CD4-positive, alpha-beta memory T cell (primary cell): ENCODE measurements at regions of chr13 and their contacts with region 1.

Region 1: DNA sequence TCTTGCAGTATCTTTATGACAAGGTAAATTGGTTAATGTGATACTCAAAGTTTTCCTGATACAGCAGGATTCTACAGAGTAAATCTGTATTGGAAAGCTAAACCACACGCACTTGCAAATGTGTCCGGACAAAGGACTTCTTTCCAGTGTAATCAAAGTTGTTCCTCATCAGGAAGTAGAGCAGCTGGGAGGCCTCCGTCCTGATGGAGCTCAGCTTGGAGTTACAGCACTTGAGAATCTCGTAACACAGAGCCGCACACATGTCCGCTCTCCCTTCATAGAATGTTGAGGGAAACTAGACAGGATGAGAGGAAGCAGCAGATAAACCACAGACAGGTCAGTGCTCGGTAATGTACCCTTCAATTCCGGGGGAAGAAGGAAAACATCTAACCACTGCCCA is 78.8 kb upstream of the SLC15A1 start:
- DNase-seq: no peak
- H3K4me3 ChIP-seq: no peak overlapping the region
- H3K4me3 Mint-ChIP-seq: no peak overlapping the region
- H3K27ac ChIP-seq: no peak overlapping the region
- H3K27ac Mint-ChIP-seq: no peak overlapping the region
- H3K4me1 ChIP-seq: no peaks in the 10 kb centered on the region
- H3K4me1 Mint-ChIP-seq: peaks cover 0 to 3% (median 0%) of the 10 kb centered on the region in 4 donors
- H3K27me3 ChIP-seq: no peaks in the 10 kb centered on the region
- H3K27me3 Mint-ChIP-seq: no peaks in the 10 kb centered on the region

Region 2: GRCh38 chr13:98598043-98598442 is 233.2 kb before region 1 on chr13:
- CTCF ChIA-PET with region 1: no interaction called
- POLR2A ChIA-PET with region 1: no interaction called
- intact Hi-C with region 1: no loop called
- DNase-seq: no peak
- H3K4me3 ChIP-seq: no peak overlapping the region
- H3K4me3 Mint-ChIP-seq: no peak overlapping the region
- H3K27ac ChIP-seq: no peak overlapping the region
- H3K27ac Mint-ChIP-seq: peak overlapping the region in 1 of 7 donors; percentile 18
- H3K4me1 ChIP-seq: no peaks in the 10 kb centered on the region
- H3K4me1 Mint-ChIP-seq: no peaks in the 10 kb centered on the region
- H3K27me3 ChIP-seq: no peaks in the 10 kb centered on the region
- H3K27me3 Mint-ChIP-seq: no peaks in the 10 kb centered on the region

Region 3: DNA sequence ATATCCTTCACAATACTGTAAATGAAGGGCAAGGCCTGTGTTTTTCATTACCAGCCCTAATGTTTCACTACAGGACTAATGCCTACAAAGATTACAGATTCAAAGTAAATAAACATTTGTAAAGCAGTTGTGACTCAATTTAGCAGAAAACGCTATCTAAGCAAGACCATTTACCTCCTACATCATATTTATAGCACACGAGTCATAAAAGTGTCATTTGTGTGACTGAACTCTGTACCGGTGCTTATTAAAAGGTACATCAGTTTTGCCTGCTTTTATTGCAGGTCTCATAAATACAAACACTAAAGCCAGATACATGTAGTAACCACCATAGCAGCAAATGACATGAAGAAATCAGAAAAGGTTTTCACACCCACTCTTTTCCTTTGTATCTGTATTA is 17.2 kb before region 1 on chr13:
- CTCF ChIA-PET with region 1: no interaction called
- POLR2A ChIA-PET with region 1: no interaction called
- intact Hi-C with region 1: no loop called
- DNase-seq: no peak
- H3K4me3 ChIP-seq: no peak overlapping the region
- H3K4me3 Mint-ChIP-seq: no peak overlapping the region
- H3K27ac ChIP-seq: no peak overlapping the region
- H3K27ac Mint-ChIP-seq: peak overlapping the region in 1 of 7 donors; percentile 12
- H3K4me1 ChIP-seq: no peaks in the 10 kb centered on the region
- H3K4me1 Mint-ChIP-seq: peaks cover 0 to 1% (median 0%) of the 10 kb centered on the region in 4 donors
- H3K27me3 ChIP-seq: no peaks in the 10 kb centered on the region
- H3K27me3 Mint-ChIP-seq: no peaks in the 10 kb centered on the region

Region 4: DNA sequence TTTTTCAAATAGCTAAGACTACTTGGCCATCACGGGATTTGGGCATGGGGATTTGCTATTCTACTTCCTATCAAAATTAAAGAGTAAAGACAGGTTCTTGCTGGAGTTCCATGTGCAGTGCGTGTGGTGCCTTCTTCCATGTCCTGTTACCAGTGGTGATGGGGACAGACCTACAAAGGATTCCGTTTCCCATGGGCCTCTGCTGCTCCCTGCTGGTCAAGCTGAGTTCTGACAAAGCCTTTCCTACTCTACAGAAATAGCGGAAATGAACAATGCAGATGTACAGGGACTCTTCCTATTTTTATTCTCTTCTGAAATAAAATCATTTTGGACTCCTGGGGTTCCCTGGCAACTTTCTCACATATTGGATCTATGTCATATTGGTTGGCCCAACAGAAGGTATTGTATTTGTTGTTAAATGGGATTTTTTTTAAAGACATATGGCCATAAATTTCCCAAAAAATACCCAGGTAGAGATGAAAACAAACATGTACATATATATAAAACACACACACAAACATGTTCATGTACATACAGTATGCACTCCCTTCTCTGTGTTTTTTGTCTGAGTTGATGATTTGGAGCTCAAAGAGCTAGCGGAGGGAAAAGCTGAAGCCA is 11.7 kb after region 1 on chr13:
- CTCF ChIA-PET with region 1: interaction called, 13 read pairs
- POLR2A ChIA-PET with region 1: no interaction called
- intact Hi-C with region 1: no loop called
- DNase-seq: peak; percentile 33 to 47 (median 35)
- H3K4me3 ChIP-seq: no peak overlapping the region
- H3K4me3 Mint-ChIP-seq: no peak overlapping the region
- H3K27ac ChIP-seq: no peak overlapping the region
- H3K27ac Mint-ChIP-seq: peak overlapping the region in 2 of 7 donors; percentile 17 to 36
- H3K4me1 ChIP-seq: no peaks in the 10 kb centered on the region
- H3K4me1 Mint-ChIP-seq: peaks cover 0 to 8% (median 7%) of the 10 kb centered on the region in 4 donors
- H3K27me3 ChIP-seq: no peaks in the 10 kb centered on the region
- H3K27me3 Mint-ChIP-seq: no peaks in the 10 kb centered on the region